WTC11 (cell line): ENCODE measurements at regions of chr15 and their contacts with region 1.

Region 1: DNA sequence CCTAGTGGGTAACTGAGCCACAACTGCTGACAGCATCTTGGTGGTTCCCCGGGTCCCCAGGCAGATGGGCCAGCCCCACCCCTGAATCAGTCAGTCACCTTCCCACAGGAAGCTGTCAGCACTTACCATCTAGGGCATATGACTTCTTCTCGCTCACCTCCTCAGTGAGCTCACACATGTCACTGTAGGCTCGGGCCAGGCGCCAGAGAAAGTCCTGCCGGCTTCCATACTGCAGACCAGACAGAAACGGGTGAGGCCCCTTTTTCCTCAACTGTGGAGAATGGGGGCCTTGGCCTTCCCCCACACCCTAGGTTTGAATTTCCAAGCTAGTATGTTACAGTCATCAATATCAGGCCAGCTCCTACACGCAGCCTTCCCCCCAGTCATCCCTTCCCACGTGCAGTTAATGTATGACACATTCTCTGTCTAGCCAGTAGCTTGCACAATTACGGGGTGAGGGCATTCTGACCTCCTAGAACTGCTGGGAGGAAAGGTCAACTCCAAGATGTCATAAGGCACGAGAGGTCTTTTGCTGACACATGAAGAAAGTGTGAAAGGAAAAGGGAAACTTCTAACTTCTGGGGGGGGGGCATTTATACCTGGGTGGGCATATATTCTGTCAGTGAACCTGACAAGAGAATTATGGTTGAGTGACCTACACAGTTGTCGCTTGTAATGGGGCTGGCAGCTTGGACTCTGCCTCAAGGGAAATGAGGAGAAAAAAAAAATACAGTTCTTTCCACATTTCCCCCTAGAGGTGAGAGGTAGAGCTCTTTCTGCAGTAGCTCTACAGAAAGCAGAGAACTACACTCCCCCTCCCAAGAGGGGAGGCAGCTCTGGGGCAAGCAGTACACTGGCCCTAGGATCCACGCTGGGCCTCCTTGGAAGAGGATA is 10.9 kb downstream of the RMDN3 start:
- DNase-seq: no peak
- ATAC-seq: peak; percentile 56
- H3K4me3 Mint-ChIP-seq: no peak overlapping the region
- H3K27ac Mint-ChIP-seq: no peak overlapping the region
- H3K4me1 Mint-ChIP-seq: peaks cover 19% of the 10 kb centered on the region
- H3K27me3 Mint-ChIP-seq: no peaks in the 10 kb centered on the region
- CTCF ChIP-seq: no peak

Region 2: GRCh38 chr15:40694688-40695468 is 49.3 kb before region 1 on chr15 and contains the start of gene RAD51:
- CTCF ChIA-PET with region 1: interaction called, 14 read pairs
- POLR2A ChIA-PET with region 1: interaction called, 3 read pairs
- DNase-seq: peak; percentile 93
- ATAC-seq: peak; percentile 92
- H3K4me3 Mint-ChIP-seq: peak within 1 kb of the TSS; percentile 97
- H3K27ac Mint-ChIP-seq: peak within 1 kb of the TSS; percentile 100
- H3K4me1 Mint-ChIP-seq: peaks cover 10% of the 10 kb centered on the region
- H3K27me3 Mint-ChIP-seq: no peaks in the 10 kb centered on the region
- CTCF ChIP-seq: no peak
- total RNA-seq, gene RAD51: 29.7 to 36.4 TPM (median 31.0 TPM) in 3 replicates

Region 3: DNA sequence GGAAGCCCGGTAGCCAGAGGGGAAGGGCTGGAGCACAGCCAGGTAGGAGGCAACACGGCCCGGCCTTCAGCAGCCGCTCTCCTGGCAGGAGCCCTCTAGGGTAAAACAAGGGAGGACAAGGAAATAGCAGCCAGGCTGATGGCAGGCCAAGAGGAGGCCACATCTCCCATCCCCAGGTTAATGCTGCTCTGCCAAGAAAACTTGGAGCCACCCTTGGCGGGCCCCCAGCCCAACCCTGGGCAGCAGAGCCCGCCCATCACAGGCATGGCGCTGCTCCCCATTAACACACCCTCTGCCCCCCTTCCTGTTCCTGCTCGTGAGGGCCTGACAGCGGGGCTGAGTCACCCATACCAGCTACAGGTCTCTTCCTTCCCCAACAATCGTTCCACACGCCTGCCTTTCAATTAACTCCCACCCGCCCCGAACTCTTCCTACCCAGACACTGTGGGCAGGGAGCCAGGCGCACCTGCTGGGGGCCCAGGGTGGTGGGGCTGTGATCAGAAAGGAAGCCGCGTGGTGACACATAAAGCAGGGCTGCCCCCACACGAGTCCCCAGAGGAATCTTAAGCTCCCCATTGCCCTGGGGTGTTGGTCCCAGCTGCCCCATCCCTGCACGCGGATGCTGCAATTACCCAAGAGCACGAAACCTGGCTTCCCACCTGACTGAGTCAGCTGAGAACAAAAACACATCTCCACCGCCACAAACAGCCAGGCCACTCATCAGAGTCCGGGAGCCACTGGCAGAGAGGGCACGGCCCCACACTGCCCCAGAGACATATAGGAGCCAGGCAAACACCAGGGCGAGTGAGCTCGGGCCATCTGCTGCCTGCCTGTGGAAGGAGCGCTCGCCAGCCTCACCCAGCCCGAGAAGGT is 25.3 kb after region 1 on chr15 and contains the start of gene C15orf62:
- CTCF ChIA-PET with region 1: interaction called, 23 read pairs
- POLR2A ChIA-PET with region 1: interaction called, 4 read pairs
- DNase-seq: no peak
- ATAC-seq: no peak
- H3K4me3 Mint-ChIP-seq: no peak within 1 kb of the TSS
- H3K27ac Mint-ChIP-seq: peak within 1 kb of the TSS; percentile 70
- H3K4me1 Mint-ChIP-seq: peaks cover 30% of the 10 kb centered on the region
- H3K27me3 Mint-ChIP-seq: no peaks in the 10 kb centered on the region
- CTCF ChIP-seq: no peak
- total RNA-seq, gene C15orf62: 0.46 to 0.92 TPM (median 0.72 TPM) in 3 replicates

Region 4: DNA sequence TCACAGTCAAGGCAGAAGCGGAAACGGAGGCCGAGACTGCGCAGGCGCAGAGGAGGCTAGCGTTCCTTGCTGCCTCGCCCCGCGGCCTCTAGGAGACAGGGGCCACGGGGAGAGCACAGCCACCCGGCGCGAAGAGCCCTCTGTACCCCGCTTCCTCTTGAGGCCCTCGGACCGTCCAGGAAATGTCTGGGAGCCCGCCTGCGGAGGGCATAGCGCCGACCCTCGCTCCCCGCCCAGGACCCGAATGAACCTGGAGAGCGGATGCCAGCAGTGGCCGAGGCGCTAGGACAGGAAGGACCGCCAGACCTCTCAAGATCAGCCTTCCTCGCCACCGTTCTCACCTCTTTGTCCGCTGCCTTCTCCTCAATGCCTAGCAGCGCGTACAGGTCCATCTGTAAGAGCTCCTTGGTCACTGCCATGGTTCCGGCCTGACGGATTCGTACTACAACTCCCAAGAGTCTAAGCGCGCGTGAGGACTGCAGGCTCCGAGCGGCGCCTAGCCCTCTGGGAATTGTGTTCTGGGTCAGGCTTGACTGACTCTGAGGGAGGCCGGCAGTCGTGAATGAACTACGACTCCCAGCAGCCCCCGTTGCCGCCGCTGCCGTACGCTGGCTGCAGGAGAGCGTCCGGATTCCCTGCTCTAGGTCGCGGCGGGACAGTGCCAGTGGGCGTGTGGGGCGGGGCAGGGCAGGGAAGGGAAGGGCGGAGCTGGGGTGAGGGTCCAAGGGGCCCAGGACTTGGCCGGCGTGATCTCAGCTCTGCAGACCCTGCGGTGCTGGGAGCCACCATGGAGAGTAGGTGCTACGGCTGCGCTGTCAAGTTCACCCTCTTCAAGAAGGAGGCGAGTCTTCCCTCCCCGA is 63.1 kb after region 1 on chr15 and contains the starts of genes DNAJC17 and ZFYVE19:
- CTCF ChIA-PET with region 1: interaction called, 21 read pairs
- POLR2A ChIA-PET with region 1: interaction called, 3 read pairs
- DNase-seq: peak; percentile 97
- ATAC-seq: peak; percentile 99
- H3K4me3 Mint-ChIP-seq: peak within 1 kb of the TSS; percentile 98
- H3K27ac Mint-ChIP-seq: peak within 1 kb of the TSS; percentile 97
- H3K4me1 Mint-ChIP-seq: peaks cover 22% of the 10 kb centered on the region
- H3K27me3 Mint-ChIP-seq: no peaks in the 10 kb centered on the region
- CTCF ChIP-seq: no peak
- total RNA-seq, gene DNAJC17: 49.8 to 53.0 TPM (median 50.2 TPM) in 3 replicates
- total RNA-seq, gene ZFYVE19: 17.3 to 18.9 TPM (median 17.6 TPM) in 3 replicates

Region 5: DNA sequence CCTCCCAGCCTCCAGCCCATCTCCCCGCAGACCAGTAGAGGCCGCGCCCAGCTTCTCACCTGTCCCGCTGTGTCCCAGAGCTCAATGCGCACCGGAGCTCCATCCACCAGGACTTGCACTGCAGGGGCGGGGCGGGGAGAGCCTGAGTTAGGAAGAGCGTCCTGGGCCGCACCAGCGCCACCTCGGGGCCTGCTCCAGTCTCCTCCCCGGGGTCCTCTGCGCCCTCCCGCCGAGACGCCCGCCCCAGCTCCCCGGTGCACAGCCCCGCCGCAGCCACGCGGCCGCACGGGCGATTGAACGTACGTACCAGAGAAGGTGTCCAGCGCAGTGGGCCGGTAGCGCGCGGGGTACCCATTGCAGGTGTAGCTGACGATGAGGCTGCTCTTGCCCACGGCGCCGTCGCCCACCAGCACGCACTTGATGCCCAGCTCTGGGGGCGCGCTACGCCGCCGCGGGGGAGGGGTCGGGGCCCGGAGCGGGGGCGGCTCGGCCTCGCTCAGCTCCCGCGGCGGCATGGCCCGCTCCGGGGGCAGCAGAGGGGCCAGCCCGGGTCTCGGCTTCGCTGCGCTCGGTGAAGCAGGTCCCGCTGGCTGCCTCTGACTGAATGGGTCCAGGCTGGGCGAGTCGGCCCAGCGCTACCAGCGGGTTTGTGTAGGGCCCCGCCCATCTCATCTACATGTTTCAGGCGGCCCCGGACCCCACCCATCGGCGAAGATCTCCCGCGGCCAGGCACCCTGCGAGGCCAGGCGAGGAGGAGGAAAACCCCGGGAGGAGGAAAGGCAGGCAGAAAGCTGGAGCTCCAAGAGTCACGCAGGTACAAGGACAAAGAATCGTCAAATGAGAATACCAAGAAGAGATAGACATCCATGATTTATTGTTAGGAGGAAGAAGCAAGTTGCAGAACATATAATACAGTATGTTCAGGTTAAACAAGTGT is 129.7 kb after region 1 on chr15 and contains the start of gene RHOV:
- CTCF ChIA-PET with region 1: interaction called, 13 read pairs
- POLR2A ChIA-PET with region 1: interaction called, 7 read pairs
- DNase-seq: peak; percentile 89
- ATAC-seq: peak; percentile 80
- H3K4me3 Mint-ChIP-seq: peak within 1 kb of the TSS; percentile 79
- H3K27ac Mint-ChIP-seq: no peak within 1 kb of the TSS; the same call in none of the 2 replicates
- H3K4me1 Mint-ChIP-seq: peaks cover 36% of the 10 kb centered on the region
- H3K27me3 Mint-ChIP-seq: peaks cover 4% of the 10 kb centered on the region; the same call in 1 of the 2 replicates
- CTCF ChIP-seq: no peak
- total RNA-seq, gene RHOV: 5.0 to 5.4 TPM (median 5.1 TPM) in 3 replicates

Region 6: GRCh38 chr15:41011055-41011815 is 267.1 kb after region 1 on chr15:
- CTCF ChIA-PET with region 1: no interaction called
- POLR2A ChIA-PET with region 1: no interaction called
- DNase-seq: no peak
- ATAC-seq: no peak
- H3K4me3 Mint-ChIP-seq: no peak overlapping the region
- H3K27ac Mint-ChIP-seq: peak overlapping the region; percentile 67
- H3K4me1 Mint-ChIP-seq: no peaks in the 10 kb centered on the region
- H3K27me3 Mint-ChIP-seq: no peaks in the 10 kb centered on the region
- CTCF ChIP-seq: no peak

Region 7: DNA sequence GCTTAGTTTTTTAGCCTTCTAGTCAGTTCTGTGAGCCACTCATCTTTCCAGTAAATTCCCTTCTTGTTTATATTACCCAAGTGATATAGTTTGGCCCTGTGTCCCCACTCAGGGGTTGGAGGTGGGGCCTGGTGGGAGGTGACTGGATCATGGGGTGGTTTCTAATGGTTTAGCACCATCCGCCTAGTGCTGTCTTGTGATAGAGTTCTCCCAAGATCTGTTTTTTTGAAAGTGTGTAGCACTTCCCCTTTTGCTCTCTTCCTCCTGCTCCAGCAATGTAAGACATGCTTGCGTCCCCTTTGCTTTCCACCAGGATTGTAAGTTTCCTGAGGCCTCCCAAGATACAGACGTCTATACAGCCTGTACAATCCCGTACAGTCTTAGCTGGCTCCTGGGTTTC is 425.6 kb after region 1 on chr15:
- CTCF ChIA-PET with region 1: no interaction called
- POLR2A ChIA-PET with region 1: no interaction called
- DNase-seq: no peak
- ATAC-seq: no peak
- H3K4me3 Mint-ChIP-seq: no peak overlapping the region
- H3K27ac Mint-ChIP-seq: no peak overlapping the region
- H3K4me1 Mint-ChIP-seq: no peaks in the 10 kb centered on the region
- H3K27me3 Mint-ChIP-seq: no peaks in the 10 kb centered on the region
- CTCF ChIP-seq: no peak